Naive thymus-derived CD4-positive, alpha-beta T cell (primary cell): ENCODE measurements at regions of chr11 and their contacts with region 1.

Region 1: DNA sequence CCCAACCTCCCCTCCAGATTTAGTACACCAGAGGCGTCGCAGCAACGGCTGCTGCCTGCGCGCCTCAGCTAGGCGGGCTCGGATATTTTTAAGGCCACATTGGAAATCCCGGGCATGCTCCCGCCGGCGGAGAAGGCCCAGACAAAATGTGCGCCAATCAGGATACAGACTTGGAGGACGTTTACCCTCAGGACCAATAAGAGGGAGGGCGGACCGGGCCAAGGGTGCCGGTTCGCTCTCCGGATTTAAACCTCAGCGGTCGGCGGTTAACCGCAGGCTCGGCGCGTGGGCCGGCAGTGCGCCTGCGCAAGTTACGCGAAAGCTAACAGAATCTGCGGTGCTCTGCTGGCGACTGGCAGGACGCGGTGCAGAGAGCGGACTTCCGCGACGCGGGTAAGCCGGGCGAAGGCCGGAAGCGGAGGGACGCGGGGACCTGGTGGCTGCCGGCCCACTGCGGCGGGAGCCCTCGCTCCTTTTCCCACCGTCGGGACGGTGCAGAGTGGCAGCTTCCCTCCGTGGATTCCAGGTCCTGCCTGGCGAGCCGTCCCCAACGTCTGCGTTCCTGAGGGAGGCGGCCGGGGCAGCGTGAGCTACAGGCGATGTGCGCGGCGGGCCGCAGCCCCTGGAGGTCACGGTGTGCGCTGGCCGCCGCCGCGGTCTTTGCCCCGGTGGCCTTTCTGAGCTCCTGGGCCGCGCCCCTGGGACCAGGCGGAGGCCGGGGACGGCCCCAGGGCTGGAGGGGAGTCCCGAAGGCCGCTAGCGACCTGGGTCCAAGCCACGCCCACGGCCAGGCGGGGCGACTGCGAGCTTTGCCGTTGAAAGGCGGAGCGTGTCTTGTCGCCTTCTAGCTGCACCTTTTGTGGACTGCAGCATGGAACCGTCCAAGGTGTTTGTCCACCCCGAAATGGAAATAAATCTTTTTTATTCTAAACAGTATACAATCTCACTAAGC is at the start of gene HYLS1:
- DNase-seq: peak; percentile 90 to 100 (median 94)
- ATAC-seq: peak; percentile 95
- H3K4me3 ChIP-seq: peak within 1 kb of the TSS; percentile 86
- H3K4me3 Mint-ChIP-seq: peak within 1 kb of the TSS; percentile 87 to 98 (median 96)
- H3K27ac ChIP-seq: peak within 1 kb of the TSS; percentile 71
- H3K27ac Mint-ChIP-seq: peak within 1 kb of the TSS; percentile 88 to 99 (median 97)
- H3K4me1 ChIP-seq: peaks cover 6% of the 10 kb centered on the region in 2 donors
- H3K4me1 Mint-ChIP-seq: peaks cover 20 to 57% (median 39%) of the 10 kb centered on the region in 7 donors
- H3K27me3 ChIP-seq: no peaks in the 10 kb centered on the region
- H3K27me3 Mint-ChIP-seq: peaks cover 0 to 4% (median 0%) of the 10 kb centered on the region in 5 donors
- total RNA-seq, gene HYLS1: 2.7 to 13.1 (median 8.0) TPM

Region 2: GRCh38 chr11:124800226-124800929 is 1087.3 kb before region 1 on chr11 and contains the start of gene MSANTD2:
- CTCF ChIA-PET with region 1: no interaction called
- POLR2A ChIA-PET with region 1: no interaction called
- intact Hi-C with region 1: loop called in 1 of 2 experiments (anchors 5 kb)
- DNase-seq: peak; percentile 65 to 89 (median 73)
- ATAC-seq: peak; percentile 92
- H3K4me3 ChIP-seq: peak within 1 kb of the TSS; percentile 71
- H3K4me3 Mint-ChIP-seq: peak within 1 kb of the TSS; percentile 88 to 97 (median 96)
- H3K27ac ChIP-seq: peak within 1 kb of the TSS; percentile 93
- H3K27ac Mint-ChIP-seq: peak within 1 kb of the TSS; percentile 88 to 98 (median 94)
- H3K4me1 ChIP-seq: peaks cover 8 to 14% of the 10 kb centered on the region in 2 donors
- H3K4me1 Mint-ChIP-seq: peaks cover 13 to 38% (median 32%) of the 10 kb centered on the region in 7 donors
- H3K27me3 ChIP-seq: no peaks in the 10 kb centered on the region
- H3K27me3 Mint-ChIP-seq: peaks cover 0 to 24% (median 0%) of the 10 kb centered on the region in 5 donors
- total RNA-seq, gene MSANTD2: 9.1 to 29.5 (median 14.4) TPM

Region 3: GRCh38 chr11:125514336-125515101 is 373.1 kb before region 1 on chr11:
- CTCF ChIA-PET with region 1: no interaction called
- POLR2A ChIA-PET with region 1: no interaction called
- intact Hi-C with region 1: loop called in 1 of 2 experiments (anchors 1 kb)
- DNase-seq: peak; percentile 16 to 72 (median 53)
- ATAC-seq: peak; percentile 87
- H3K4me3 ChIP-seq: no peak overlapping the region
- H3K4me3 Mint-ChIP-seq: peak overlapping the region; percentile 12 to 72 (median 44)
- H3K27ac ChIP-seq: peak overlapping the region; percentile 56
- H3K27ac Mint-ChIP-seq: peak overlapping the region; percentile 58 to 94 (median 85)
- H3K4me1 ChIP-seq: peaks cover 17 to 24% of the 10 kb centered on the region in 2 donors
- H3K4me1 Mint-ChIP-seq: peaks cover 30 to 47% (median 38%) of the 10 kb centered on the region in 7 donors
- H3K27me3 ChIP-seq: no peaks in the 10 kb centered on the region
- H3K27me3 Mint-ChIP-seq: no peaks in the 10 kb centered on the region

Region 4: DNA sequence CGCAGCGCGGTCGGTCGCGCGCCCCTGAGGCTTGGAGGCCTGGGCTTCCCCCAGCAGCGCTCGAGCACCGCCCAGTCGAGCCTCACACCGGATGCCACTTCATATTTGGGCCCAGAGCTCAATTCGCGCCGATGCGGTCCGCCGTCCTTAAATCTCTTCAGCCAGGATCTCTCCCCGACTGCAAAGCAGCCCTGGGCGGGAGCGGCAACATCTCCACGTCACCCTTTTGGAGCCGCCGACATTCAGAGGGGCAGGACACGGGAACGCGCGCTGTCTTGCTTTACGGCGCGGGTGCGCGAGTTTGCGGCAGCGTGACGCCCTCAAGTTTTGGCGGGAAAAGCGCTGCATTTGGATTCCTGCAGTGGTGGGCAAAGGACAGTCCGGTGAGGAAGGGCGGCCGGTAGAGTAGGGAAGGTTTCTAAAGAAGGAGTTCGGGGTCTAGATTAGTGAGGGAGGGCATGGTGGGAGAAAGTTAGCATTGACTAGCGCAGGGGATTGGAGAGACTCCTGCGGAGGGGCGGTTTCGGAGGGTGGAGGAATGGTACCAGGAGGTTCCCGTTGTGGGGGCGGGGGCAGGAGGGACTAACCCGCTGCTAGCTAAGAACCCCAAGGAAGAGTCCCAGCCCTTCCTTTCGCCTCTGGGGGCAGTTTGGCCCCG is 261.9 kb before region 1 on chr11:
- CTCF ChIA-PET with region 1: no interaction called
- POLR2A ChIA-PET with region 1: interaction called, 7 read pairs
- intact Hi-C with region 1: loop called (anchors 1 kb)
- DNase-seq: peak; percentile 70 to 87 (median 82)
- ATAC-seq: peak; percentile 95
- H3K4me3 ChIP-seq: peak overlapping the region; percentile 91
- H3K4me3 Mint-ChIP-seq: peak overlapping the region; percentile 82 to 99 (median 98)
- H3K27ac ChIP-seq: peak overlapping the region; percentile 96
- H3K27ac Mint-ChIP-seq: peak overlapping the region; percentile 64 to 99 (median 98)
- H3K4me1 ChIP-seq: peaks cover 0 to 5% of the 10 kb centered on the region in 2 donors
- H3K4me1 Mint-ChIP-seq: peaks cover 13 to 47% (median 15%) of the 10 kb centered on the region in 7 donors
- H3K27me3 ChIP-seq: no peaks in the 10 kb centered on the region
- H3K27me3 Mint-ChIP-seq: no peaks in the 10 kb centered on the region

Region 5: DNA sequence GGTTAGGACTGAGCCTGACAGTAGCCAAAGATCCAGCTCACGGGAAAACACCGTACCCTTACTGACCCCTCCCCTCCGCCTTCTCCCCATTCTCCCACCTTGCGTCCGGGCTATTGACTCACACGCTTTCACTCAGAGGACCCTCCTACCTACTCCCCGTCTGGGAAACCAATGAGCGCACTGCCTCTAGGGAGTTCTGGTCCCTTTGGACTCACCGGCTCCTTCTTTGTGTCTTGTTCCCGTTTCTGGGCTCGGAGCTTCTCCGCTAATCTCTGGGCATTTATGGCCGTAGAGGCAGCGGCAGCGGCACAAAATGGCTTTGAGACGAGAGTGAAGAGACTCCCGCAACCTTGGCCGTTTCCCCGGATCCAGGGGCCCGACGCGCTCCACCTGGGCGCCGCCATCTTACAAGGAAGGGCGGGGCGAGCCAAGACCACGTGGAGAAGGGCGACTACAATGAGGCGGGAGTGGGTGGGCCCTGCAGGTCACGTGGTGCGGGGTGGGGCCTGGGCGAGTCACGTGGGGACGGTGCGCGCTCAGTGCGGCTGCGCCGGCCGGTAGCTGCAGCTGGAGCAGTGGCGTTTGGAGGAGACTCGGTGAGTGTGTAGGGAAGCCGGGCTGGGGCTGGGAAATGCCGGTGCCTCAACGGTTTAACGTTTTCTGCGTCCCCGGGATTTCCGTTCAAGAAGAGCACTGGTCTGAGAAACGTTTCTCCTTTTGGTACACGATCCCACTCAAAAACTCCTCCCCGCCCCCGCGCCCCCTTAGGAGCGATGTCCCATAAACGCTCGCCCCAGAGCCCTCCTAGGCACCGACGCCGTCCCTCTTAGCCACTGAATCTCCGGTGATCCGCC is 323.8 kb after region 1 on chr11 and contains the starts of genes FAM118B and RPUSD4:
- CTCF ChIA-PET with region 1: no interaction called
- POLR2A ChIA-PET with region 1: interaction called, 9 read pairs
- intact Hi-C with region 1: loop called (anchors 1 kb)
- DNase-seq: peak; percentile 96 to 99 (median 98)
- ATAC-seq: peak; percentile 99
- H3K4me3 ChIP-seq: peak within 1 kb of the TSS; percentile 100
- H3K4me3 Mint-ChIP-seq: peak within 1 kb of the TSS; percentile 93 to 100 (median 98)
- H3K27ac ChIP-seq: peak within 1 kb of the TSS; percentile 84
- H3K27ac Mint-ChIP-seq: peak within 1 kb of the TSS; percentile 90 to 99 (median 96)
- H3K4me1 ChIP-seq: peaks cover 12 to 15% of the 10 kb centered on the region in 2 donors
- H3K4me1 Mint-ChIP-seq: peaks cover 28 to 57% (median 38%) of the 10 kb centered on the region in 7 donors
- H3K27me3 ChIP-seq: no peaks in the 10 kb centered on the region
- H3K27me3 Mint-ChIP-seq: peaks cover 0 to 6% (median 0%) of the 10 kb centered on the region in 5 donors
- total RNA-seq, gene FAM118B: 4.0 to 10.9 (median 10.5) TPM
- total RNA-seq, gene RPUSD4: 30.1 to 49.6 (median 43.8) TPM

Region 6: GRCh38 chr11:126355324-126355925 is 467.8 kb after region 1 on chr11 and contains the start of gene ST3GAL4:
- CTCF ChIA-PET with region 1: no interaction called
- POLR2A ChIA-PET with region 1: no interaction called
- intact Hi-C with region 1: loop called (anchors 5 to 10 kb)
- DNase-seq: peak; percentile 8 to 83 (median 36)
- ATAC-seq: peak; percentile 77
- H3K4me3 ChIP-seq: peak within 1 kb of the TSS; percentile 74
- H3K4me3 Mint-ChIP-seq: peak within 1 kb of the TSS; percentile 77 to 95 (median 88)
- H3K27ac ChIP-seq: peak within 1 kb of the TSS; percentile 51
- H3K27ac Mint-ChIP-seq: peak within 1 kb of the TSS in 8 of 9 donors; percentile 19 to 91 (median 62)
- H3K4me1 ChIP-seq: peaks cover 8 to 14% of the 10 kb centered on the region in 2 donors
- H3K4me1 Mint-ChIP-seq: peaks cover 21 to 46% (median 29%) of the 10 kb centered on the region in 7 donors
- H3K27me3 ChIP-seq: no peaks in the 10 kb centered on the region
- H3K27me3 Mint-ChIP-seq: no peaks in the 10 kb centered on the region
- total RNA-seq, gene ST3GAL4: 2.7 to 13.4 (median 4.7) TPM

Region 7: DNA sequence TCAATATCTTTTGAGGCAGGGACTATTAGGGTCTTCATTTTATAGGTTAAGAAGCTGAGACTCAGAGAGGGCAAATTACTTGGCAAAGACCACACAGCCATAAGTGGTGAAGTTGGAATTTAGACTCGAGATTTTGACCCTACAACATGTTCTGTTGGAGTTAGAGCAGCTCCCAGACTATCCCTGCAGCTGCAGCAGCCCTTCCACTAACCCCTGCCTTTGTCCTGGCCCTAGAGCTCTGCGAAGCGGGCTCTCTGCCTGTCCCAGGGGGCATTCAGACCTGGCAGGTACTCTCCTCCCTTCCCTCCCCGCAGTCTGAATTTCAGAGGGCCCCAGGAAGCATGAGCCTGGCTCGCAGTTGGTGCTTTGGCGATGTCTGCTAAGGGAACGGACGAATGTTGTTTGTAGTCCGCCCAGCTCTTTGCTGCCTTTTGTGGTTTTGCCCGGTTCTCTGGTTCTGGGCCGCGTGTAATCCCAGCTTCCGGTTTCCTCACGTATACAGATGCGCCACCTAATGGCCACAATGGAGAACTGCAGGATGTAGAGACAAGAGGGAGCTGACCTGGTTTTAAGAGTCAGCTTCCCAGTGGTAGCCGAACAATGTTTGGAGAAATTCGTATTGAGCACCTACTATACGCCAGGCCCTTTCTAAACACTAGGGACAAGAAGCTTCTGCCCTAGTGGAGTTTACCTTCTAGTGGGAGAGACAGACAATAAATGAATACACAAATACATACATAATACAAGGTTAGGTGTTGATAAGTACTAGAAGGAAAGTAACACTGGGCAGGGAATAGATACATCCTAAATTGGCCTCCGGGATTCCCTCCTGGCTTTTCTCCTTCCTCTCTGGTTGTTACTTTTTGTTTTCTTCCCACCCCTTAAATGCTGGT is 593.0 kb after region 1 on chr11:
- CTCF ChIA-PET with region 1: no interaction called
- POLR2A ChIA-PET with region 1: no interaction called
- intact Hi-C with region 1: no loop called
- DNase-seq: peak; percentile 45 to 76 (median 65)
- ATAC-seq: peak; percentile 93
- H3K4me3 ChIP-seq: peak overlapping the region; percentile 31
- H3K4me3 Mint-ChIP-seq: peak overlapping the region; percentile 22 to 79 (median 68)
- H3K27ac ChIP-seq: no peak overlapping the region
- H3K27ac Mint-ChIP-seq: peak overlapping the region; percentile 35 to 88 (median 70)
- H3K4me1 ChIP-seq: peaks cover 0 to 13% of the 10 kb centered on the region in 2 donors
- H3K4me1 Mint-ChIP-seq: peaks cover 12 to 29% (median 19%) of the 10 kb centered on the region in 7 donors
- H3K27me3 ChIP-seq: no peaks in the 10 kb centered on the region
- H3K27me3 Mint-ChIP-seq: peaks cover 0 to 6% (median 0%) of the 10 kb centered on the region in 5 donors